MCF 10A (cell line): ENCODE measurements at regions of chr9 and their contacts with region 1.

Region 1: DNA sequence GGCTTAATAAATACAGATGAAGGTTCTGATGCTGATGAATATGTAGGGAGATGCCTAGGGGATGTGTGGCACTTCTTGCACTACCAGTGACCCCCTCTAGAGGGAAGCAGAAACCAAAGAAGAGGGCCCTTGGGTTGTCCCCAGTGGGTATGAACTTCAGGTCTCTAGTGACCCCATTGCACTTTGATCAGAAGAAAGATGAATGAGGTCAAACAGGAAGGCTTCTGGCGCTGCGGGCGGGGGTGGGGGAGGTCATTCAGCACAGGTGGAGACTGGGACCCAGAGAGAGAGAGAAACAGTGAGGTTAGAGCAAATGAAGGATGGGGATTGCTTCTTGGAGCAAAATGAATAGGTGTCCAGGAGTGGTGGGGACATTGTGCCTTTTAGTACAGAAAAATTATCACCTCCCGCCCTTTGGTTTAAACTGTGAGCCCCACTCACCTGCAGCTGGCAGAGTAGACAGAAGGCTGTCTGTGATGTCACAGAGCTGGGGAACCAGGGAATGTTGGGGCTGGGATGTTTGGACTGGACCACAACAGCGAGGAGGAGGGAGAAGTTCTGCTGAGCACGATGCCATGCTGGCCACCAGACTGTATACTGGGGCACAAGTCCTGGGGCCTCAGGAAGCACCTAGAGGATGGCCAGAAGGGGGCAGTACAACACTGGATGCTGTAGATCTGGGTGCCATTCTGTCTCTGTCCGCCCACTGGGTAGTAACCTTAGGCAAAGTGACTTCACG is at the start of gene TEX48:
- DNase-seq: peak; percentile 90
- H3K4me3 Mint-ChIP-seq: no peak within 1 kb of the TSS
- H3K27ac Mint-ChIP-seq: no peak within 1 kb of the TSS
- H3K4me1 Mint-ChIP-seq: peaks cover 32% of the 10 kb centered on the region
- H3K27me3 Mint-ChIP-seq: no peaks in the 10 kb centered on the region
- CTCF ChIP-seq: peak; percentile 84
- total RNA-seq, gene TEX48: not detected in 2 replicates

Region 2: GRCh38 chr9:114603248-114603647 is 78.5 kb before region 1 on chr9:
- CTCF ChIA-PET with region 1: no interaction called
- POLR2A ChIA-PET with region 1: no interaction called
- intact Hi-C with region 1: no loop called
- DNase-seq: no peak
- H3K4me3 Mint-ChIP-seq: no peak overlapping the region
- H3K27ac Mint-ChIP-seq: no peak overlapping the region
- H3K4me1 Mint-ChIP-seq: peaks cover 8% of the 10 kb centered on the region
- H3K27me3 Mint-ChIP-seq: no peaks in the 10 kb centered on the region
- CTCF ChIP-seq: no peak

Region 3: DNA sequence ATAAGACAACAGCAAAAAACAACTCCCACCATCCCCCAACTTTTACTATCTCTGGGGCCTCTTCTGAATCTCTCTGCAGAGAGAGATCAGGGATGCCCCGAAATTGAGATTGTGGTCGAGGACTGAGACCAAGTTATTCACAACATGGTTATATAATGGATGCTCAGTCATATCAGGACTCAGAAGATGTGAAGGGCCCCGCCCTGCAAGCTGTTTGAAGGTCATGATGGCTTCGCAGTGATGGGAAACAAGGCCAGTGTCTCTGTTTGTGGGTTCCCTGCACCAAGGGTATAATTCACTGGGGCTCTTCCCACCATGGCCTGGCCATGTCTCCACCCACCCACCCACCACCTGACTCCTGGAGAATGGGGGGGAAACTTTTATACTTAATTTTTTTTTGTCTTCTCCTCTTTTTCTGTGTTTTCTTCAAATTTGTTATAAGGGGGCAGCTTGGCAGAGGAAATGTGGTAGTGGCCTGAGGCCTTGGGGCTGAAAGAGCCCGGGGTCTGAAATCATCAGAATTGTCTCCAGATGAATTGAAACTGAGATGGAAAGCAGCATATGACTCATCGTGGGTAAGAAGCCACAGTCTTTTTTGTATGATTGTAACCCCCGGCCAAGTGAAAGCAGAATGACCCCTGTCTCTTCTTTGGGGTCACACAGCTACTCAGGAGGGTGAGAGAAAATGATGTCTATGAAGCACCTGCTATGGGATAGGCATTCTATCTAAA is 15.2 kb after region 1 on chr9:
- CTCF ChIA-PET with region 1: interaction called, 33 read pairs
- POLR2A ChIA-PET with region 1: interaction called, 10 read pairs
- intact Hi-C with region 1: no loop called
- DNase-seq: no peak
- H3K4me3 Mint-ChIP-seq: no peak overlapping the region
- H3K27ac Mint-ChIP-seq: no peak overlapping the region
- H3K4me1 Mint-ChIP-seq: no peaks in the 10 kb centered on the region
- H3K27me3 Mint-ChIP-seq: no peaks in the 10 kb centered on the region
- CTCF ChIP-seq: no peak

Region 4: DNA sequence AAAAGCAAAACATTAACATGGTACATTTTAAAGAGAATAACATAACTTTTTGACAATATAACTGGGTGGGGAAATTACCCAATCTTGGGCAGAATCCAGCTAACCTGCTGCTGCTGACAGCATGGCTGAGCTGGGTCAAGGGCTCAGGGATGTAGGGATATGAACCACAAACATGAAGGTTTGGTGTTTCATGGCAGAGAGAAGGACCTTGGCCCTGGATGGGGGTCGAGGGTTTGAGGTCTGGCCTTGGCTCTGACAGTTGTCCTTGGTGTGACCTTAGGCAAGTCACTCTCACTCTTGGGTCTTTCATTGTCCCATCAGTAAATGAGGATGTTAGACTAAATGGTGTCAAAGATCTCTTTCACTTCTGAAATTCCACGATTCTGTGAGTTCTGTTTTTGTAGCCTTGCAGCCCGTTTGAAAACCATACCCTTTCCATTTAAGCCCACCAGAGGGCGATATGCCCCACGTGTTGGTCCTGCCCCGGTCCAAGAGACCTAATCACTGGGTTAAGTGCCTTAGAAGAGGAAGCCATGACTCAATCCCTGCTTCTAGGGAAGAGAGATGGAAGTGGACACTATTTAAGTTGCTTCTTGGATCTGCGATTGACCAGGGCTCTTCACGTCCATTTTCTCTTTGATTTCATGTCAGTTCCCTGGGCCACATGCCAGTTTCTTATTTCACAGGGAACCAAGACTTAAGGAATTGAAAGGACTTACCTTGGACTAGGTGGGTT is 57.0 kb after region 1 on chr9:
- CTCF ChIA-PET with region 1: interaction called, 136 read pairs
- POLR2A ChIA-PET with region 1: no interaction called
- intact Hi-C with region 1: loop called (anchors 1 kb)
- DNase-seq: peak; percentile 87
- H3K4me3 Mint-ChIP-seq: no peak overlapping the region
- H3K27ac Mint-ChIP-seq: no peak overlapping the region
- H3K4me1 Mint-ChIP-seq: peaks cover 23% of the 10 kb centered on the region
- H3K27me3 Mint-ChIP-seq: no peaks in the 10 kb centered on the region
- CTCF ChIP-seq: peak; percentile 85

Region 5: GRCh38 chr9:114919611-114920010 is 237.8 kb after region 1 on chr9:
- CTCF ChIA-PET with region 1: interaction called, 250 read pairs
- POLR2A ChIA-PET with region 1: interaction called, 3 read pairs
- intact Hi-C with region 1: no loop called
- DNase-seq: no peak
- H3K4me3 Mint-ChIP-seq: no peak overlapping the region
- H3K27ac Mint-ChIP-seq: no peak overlapping the region
- H3K4me1 Mint-ChIP-seq: no peaks in the 10 kb centered on the region
- H3K27me3 Mint-ChIP-seq: no peaks in the 10 kb centered on the region
- CTCF ChIP-seq: no peak

Region 6: GRCh38 chr9:115013998-115014397 is 332.2 kb after region 1 on chr9:
- CTCF ChIA-PET with region 1: interaction called, 200 read pairs
- POLR2A ChIA-PET with region 1: no interaction called
- intact Hi-C with region 1: loop called (anchors 1 kb)
- DNase-seq: peak; percentile 84
- H3K4me3 Mint-ChIP-seq: no peak overlapping the region
- H3K27ac Mint-ChIP-seq: no peak overlapping the region
- H3K4me1 Mint-ChIP-seq: peaks cover 17% of the 10 kb centered on the region
- H3K27me3 Mint-ChIP-seq: peaks cover 14% of the 10 kb centered on the region
- CTCF ChIP-seq: peak; percentile 75

Region 7: DNA sequence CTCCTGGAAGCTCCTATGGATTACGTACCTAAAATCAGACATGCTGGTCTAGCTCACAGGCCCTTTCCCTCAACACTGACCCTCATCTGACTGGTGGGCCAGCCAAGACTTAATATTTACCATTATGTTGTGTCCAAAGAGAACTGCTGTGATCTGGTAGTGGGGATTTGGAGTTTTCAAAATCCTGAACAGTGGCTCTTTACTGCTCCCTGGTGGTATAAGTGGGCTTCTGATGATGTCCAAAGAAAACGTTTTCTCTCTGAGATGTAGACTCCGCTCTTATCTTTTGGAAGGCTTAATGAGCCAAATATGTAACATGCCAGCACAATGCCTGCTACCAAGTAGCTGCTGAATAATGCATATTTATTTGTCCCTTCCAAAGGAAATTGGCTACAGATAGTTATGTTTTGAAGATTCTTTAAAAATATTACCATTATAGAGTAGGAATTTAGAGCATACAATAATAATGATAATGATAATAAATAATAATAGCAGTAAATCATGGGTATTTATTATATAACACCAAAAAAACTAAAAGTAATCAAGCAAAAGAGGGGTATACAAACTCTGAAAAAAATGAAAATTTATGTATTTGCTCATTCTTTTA is 842.8 kb after region 1 on chr9:
- CTCF ChIA-PET with region 1: interaction called, 7 read pairs
- POLR2A ChIA-PET with region 1: no interaction called
- intact Hi-C with region 1: loop called (anchors 1 kb)
- DNase-seq: peak; percentile 73
- H3K4me3 Mint-ChIP-seq: no peak overlapping the region
- H3K27ac Mint-ChIP-seq: no peak overlapping the region
- H3K4me1 Mint-ChIP-seq: no peaks in the 10 kb centered on the region
- H3K27me3 Mint-ChIP-seq: no peaks in the 10 kb centered on the region
- CTCF ChIP-seq: peak; percentile 67